Activated CD4-positive, alpha-beta T cell treated with anti-CD3 and anti-CD28 coated beads, Interleukin-2, amount 10 ng/mL, durations not matched to agents 24 days and 14 days (primary cell): ENCODE measurements at regions of chr17 and their contacts with region 1.

Region 1: DNA sequence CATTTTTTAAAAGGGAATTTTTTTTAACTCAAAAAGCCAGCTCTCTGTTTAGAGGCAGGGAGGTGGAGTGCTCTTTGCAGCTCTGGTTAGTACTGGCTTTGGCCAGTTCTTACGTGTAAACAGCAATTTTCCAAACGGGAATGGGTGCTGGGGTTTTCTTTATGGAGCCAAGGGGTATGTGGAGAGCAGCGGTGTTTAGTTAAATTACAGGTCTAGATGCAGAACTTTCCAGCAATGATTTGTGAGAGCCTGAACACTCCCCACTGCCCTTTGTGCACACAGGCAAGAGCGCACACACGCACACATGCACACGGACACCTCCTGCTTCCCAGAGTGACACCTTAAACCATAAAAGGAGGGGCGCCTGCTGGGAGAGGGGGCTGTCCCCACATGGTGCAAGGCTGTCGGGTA is 140.2 kb downstream of the MSI2 start:
- DNase-seq: no peak
- H3K4me3 Mint-ChIP-seq: no peak overlapping the region
- H3K27ac Mint-ChIP-seq: no peak overlapping the region
- H3K4me1 Mint-ChIP-seq: peaks cover 20% of the 10 kb centered on the region
- H3K27me3 Mint-ChIP-seq: no peaks in the 10 kb centered on the region

Region 2: DNA sequence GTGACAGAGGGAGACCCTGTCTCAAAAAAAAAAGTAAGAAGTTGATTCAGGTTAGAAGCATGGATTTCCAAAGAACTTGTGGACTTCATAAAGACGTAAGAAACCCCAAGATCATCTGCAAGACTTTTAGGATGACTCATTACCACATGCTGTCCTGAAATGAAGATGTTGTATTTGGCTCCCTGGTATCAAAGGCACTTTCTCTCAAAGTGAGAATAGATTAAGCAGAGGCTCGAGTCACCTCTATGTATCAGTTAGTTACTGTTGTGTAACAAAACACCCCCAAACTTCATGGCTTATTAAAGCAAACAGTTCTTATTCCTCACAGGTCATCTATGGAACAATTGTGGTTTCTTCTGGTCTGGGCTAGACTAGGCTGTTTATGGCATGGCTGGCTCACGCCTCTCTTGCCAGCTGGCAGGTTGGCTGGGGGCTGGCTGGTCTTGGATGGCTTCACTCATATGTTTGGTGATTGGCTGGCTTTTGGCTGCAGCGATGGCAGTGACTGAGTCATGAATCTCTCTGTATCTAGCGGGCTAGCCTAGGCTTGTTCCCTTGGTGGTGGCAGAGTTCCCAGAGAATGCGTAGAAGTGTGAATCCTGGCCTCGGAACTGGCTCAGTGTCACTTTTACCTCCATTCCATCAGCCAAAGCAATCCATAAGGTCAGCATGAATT is 200.6 kb before region 1 on chr17:
- intact Hi-C with region 1: no loop called
- DNase-seq: no peak
- H3K4me3 Mint-ChIP-seq: no peak overlapping the region
- H3K27ac Mint-ChIP-seq: no peak overlapping the region
- H3K4me1 Mint-ChIP-seq: no peaks in the 10 kb centered on the region
- H3K27me3 Mint-ChIP-seq: peaks cover 12% of the 10 kb centered on the region

Region 3: GRCh38 chr17:57243171-57243948 is 153.2 kb before region 1 on chr17:
- intact Hi-C with region 1: no loop called
- DNase-seq: peak; percentile 93
- H3K4me3 Mint-ChIP-seq: no peak overlapping the region
- H3K27ac Mint-ChIP-seq: peak overlapping the region; percentile 64
- H3K4me1 Mint-ChIP-seq: peaks cover 7% of the 10 kb centered on the region
- H3K27me3 Mint-ChIP-seq: peaks cover 23% of the 10 kb centered on the region

Region 4: GRCh38 chr17:57379237-57379894 is 17.1 kb before region 1 on chr17:
- intact Hi-C with region 1: loop called (anchors 2 kb)
- DNase-seq: no peak
- H3K4me3 Mint-ChIP-seq: no peak overlapping the region
- H3K27ac Mint-ChIP-seq: peak overlapping the region; percentile 71
- H3K4me1 Mint-ChIP-seq: peaks cover 17% of the 10 kb centered on the region
- H3K27me3 Mint-ChIP-seq: no peaks in the 10 kb centered on the region